A549 (cell line): ENCODE measurements at regions of chr7 and their contacts with region 1.

Region 1: DNA sequence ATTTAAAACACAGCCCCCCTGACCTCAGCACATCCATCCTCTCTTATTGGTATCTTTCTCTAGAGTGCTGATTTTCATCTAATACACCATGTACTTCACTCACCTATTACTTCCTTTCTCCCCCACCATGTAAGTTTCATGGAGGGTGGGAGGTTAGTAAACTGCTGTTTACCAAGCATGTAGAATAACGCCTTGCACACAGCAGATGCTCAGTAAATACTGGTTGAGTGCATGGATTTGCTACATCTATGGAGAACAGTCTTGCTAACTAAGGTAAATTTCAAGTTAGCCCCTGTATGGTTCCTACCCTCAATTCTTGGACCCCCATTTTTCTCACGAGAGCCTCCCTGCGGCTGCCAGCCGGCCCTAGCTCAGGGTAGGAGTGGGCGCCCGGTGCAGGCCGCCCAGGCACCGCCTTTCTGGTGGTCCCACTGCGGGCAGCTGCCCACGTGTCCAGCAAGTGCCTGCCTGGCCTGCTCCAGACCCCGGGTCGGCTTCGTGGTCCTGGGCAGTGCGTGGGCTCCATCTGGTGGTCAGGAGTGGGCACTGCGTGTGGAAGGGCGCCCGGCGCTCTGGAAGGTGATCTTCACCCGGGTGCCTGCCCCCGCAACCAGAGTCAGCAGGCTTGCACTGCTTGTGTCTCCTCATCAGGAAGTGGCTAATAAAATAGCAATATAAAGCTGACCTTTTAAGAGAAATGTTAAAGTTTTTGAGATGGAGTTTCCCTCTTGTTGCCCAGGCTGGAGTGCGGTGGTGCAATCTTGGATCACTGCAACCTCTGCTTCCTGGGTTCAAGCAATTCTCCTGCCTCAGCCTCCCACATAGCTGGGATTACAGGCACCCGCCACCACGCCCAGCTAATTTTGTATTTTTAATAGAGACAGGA is 63.4 kb upstream of the DNAJB6 start:
- DNase-seq: peak; percentile 69 to 95
- ATAC-seq: peak; percentile 74 to 86
- H3K4me3 ChIP-seq: no peak overlapping the region
- H3K27ac ChIP-seq: peak overlapping the region; percentile 59 to 62; a peak in 2 of 6 replicates
- H3K4me1 ChIP-seq: peaks cover 20% of the 10 kb centered on the region; the same call in 2 of the 3 replicates
- CTCF ChIP-seq: peak; percentile 86
- EP300 ChIP-seq: no peak
- POLR2A ChIP-seq: no peak
- RAD21 ChIP-seq: peak; percentile 80 to 83

Region 2: GRCh38 chr7:157089100-157089610 is 184.3 kb before region 1 on chr7:
- CTCF ChIA-PET with region 1: no interaction called
- POLR2A ChIA-PET with region 1: no interaction called
- DNase-seq: no peak
- ATAC-seq: no peak
- H3K4me3 ChIP-seq: no peak overlapping the region
- H3K27ac ChIP-seq: no peak overlapping the region
- H3K4me1 ChIP-seq: no peaks in the 10 kb centered on the region
- CTCF ChIP-seq: no peak
- EP300 ChIP-seq: no peak
- POLR2A ChIP-seq: no peak
- RAD21 ChIP-seq: no peak

Region 3: DNA sequence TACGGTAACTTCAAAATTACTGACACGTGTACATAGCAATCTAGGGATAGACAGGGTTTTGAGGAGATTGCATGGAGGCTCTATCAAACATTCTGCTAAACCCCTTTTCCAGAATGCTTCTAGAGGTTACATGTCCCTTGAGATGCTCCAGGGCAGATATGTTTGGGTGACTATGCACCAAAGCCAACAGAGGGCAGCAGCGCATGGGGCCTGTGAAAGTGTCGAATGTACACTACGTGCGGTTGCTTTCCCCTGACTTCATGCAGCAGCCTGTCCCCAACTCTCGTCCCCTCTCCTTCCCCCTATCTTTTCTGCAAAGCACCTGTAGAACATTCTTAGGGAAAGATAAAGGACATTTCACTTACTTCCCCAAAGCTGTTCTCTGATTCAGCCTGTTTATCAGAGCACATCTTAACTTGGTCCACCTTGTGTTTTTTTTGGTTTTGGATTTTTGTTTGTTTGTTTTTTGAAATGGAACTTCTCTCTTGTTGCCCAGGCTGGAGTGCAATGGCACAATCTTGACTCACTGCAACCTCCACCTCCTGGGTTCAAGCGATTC is 44.5 kb before region 1 on chr7:
- CTCF ChIA-PET with region 1: interaction called, 53 read pairs
- POLR2A ChIA-PET with region 1: no interaction called
- DNase-seq: peak; percentile 21 to 53
- ATAC-seq: peak; percentile 90 to 94
- H3K4me3 ChIP-seq: no peak overlapping the region
- H3K27ac ChIP-seq: no peak overlapping the region
- H3K4me1 ChIP-seq: no peaks in the 10 kb centered on the region
- CTCF ChIP-seq: peak; percentile 42
- EP300 ChIP-seq: no peak
- POLR2A ChIP-seq: no peak
- RAD21 ChIP-seq: peak in 1 of 2 experiments; percentile 55; a peak in 3 of 5 replicates

Region 4: DNA sequence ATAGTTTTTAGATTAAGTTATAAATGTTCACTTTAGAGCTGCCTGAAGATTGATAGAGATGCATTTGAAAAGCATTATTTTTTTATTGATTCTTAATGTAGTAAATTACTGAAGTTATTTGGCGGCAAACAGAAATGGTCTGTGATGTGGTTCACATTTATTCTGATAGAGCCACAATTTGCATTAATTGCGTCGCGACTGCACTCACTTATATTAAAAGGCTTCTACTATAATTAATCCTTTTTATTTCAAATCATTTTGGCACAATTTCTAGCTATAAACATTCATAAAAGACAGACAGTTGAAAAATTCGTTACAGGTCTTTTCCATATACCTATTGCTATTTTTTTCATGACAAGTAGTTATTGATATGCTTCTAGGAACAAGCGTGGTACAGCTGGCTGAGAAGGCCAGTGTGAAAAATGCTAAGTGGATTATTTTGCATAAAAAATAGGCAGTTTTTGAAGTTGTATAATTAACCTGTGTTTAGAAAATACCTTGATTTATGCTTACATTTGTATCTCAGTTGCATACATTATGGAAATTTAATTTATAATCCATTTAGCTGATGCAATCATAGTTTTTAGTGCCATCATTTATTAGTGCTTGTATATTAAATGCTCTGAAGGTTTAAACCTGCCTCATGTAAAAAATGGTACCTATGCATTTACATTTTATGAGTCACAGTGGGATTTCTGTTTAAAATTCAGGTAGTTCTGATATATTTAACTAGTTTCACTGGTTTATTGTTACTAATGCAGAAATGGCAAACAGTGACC is 28.7 kb before region 1 on chr7:
- CTCF ChIA-PET with region 1: interaction called, 47 read pairs
- POLR2A ChIA-PET with region 1: no interaction called
- DNase-seq: no peak
- ATAC-seq: no peak
- H3K4me3 ChIP-seq: no peak overlapping the region
- H3K27ac ChIP-seq: no peak overlapping the region
- H3K4me1 ChIP-seq: no peaks in the 10 kb centered on the region
- CTCF ChIP-seq: no peak
- EP300 ChIP-seq: no peak
- POLR2A ChIP-seq: no peak
- RAD21 ChIP-seq: no peak

Region 5: DNA sequence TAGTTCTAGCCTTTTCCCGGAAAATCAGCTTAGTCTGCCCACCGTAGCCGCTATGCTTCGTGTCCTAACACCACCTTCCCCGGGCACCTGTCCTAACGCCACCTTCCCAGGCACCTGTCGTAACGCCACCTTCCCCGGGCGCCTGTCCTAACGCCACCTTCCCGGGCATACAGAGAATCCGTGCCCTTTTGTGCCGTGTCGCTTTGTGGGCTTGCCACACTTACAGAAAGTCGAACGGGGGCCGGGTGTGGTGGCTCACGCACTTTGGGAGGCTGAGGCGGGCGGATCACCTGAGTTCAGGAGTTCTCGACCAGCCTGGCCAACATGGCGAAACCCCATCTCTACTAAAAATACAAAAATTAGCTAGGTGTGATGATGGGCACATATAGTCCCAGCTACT is 10.3 kb before region 1 on chr7:
- CTCF ChIA-PET with region 1: interaction called, 26 read pairs
- POLR2A ChIA-PET with region 1: no interaction called
- DNase-seq: no peak
- ATAC-seq: no peak
- H3K4me3 ChIP-seq: no peak overlapping the region
- H3K27ac ChIP-seq: no peak overlapping the region
- H3K4me1 ChIP-seq: no peaks in the 10 kb centered on the region
- CTCF ChIP-seq: no peak
- EP300 ChIP-seq: no peak
- POLR2A ChIP-seq: no peak
- RAD21 ChIP-seq: no peak